Panc1 (cell line): ENCODE measurements at regions of chr16 and their contacts with region 1.

Region 1: GRCh38 chr16:83059237-83059636 is 432.5 kb downstream of the CDH13 start:
- DNase-seq: no peak
- ATAC-seq: no peak
- H3K4me3 ChIP-seq: no peak overlapping the region
- H3K27ac ChIP-seq: no peak overlapping the region
- H3K4me1 ChIP-seq: no peaks in the 10 kb centered on the region
- H3K27me3 ChIP-seq: no peaks in the 10 kb centered on the region
- CTCF ChIP-seq: no peak

Region 2: GRCh38 chr16:83390759-83391158 is 331.5 kb after region 1 on chr16:
- CTCF ChIA-PET with region 1: no interaction called
- POLR2A ChIA-PET with region 1: interaction called, 10 read pairs
- in situ Hi-C with region 1: no loop called
- intact Hi-C with region 1: no loop called
- DNase-seq: no peak
- ATAC-seq: no peak
- H3K4me3 ChIP-seq: no peak overlapping the region
- H3K27ac ChIP-seq: no peak overlapping the region
- H3K4me1 ChIP-seq: no peaks in the 10 kb centered on the region
- H3K27me3 ChIP-seq: no peaks in the 10 kb centered on the region; the same call in 1 of the 2 replicates
- CTCF ChIP-seq: no peak

Region 3: GRCh38 chr16:83441517-83441916 is 382.3 kb after region 1 on chr16:
- CTCF ChIA-PET with region 1: no interaction called
- POLR2A ChIA-PET with region 1: no interaction called
- in situ Hi-C with region 1: no loop called
- intact Hi-C with region 1: no loop called
- DNase-seq: no peak
- ATAC-seq: no peak
- H3K4me3 ChIP-seq: no peak overlapping the region
- H3K27ac ChIP-seq: no peak overlapping the region
- H3K4me1 ChIP-seq: no peaks in the 10 kb centered on the region
- H3K27me3 ChIP-seq: no peaks in the 10 kb centered on the region; the same call in 1 of the 2 replicates
- CTCF ChIP-seq: no peak